Activated CD4-positive, alpha-beta T cell treated with anti-CD3 and anti-CD28 coated beads, Interleukin-2, amount 10 ng/mL, durations not matched to agents 24 days and 14 days (primary cell): ENCODE measurements at regions of chr3 and their contacts with region 1.

Region 1: DNA sequence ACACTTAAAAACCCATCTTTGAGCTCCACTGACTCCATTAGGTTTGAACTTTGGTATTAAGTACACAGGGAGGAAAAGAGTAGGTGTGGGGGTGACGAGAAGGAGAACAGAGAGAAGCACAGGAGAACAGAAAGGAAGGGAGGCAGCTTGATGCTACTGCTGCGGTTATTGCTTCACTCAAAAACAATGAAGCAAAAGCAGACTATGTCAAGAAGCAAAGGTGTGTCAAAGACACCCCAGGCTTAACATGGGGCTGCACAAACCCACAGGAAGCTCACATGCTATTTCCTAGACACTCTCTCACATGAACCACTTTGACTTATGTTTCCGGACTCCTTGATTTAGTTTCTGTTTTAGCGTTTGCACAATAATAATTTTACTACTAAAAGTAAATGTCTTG is 961.0 kb upstream of the CFAP20DC start:
- DNase-seq: peak; percentile 92
- H3K4me3 Mint-ChIP-seq: peak overlapping the region; percentile 80
- H3K27ac Mint-ChIP-seq: peak overlapping the region; percentile 93
- H3K4me1 Mint-ChIP-seq: peaks cover 66% of the 10 kb centered on the region
- H3K27me3 Mint-ChIP-seq: no peaks in the 10 kb centered on the region

Region 2: DNA sequence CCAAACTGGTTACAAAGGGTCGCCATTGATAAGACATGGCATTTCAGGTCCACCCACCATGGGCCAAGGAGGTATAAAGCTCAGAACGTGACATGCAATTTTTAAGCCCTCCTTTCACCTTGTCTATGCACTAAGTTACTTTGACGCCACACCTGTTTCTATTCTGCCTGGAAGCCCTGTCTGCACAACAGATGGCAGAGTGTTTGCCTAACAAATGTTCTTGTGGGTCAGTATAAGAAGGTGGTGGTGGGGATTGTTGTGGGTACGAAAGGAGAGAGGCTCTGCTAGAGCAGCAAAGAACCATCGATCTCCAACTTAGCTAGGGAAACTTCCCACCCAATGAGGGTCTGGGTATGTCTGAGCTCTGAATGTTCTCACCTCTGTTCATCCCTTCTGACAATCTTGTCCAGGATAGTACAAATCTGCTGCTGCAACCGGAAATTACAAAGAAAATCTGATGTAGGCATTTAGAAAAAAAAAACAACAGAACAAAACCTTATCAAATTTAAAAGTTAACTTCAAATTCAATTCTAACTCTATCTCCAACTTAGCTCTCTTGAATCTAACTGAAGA is 16.0 kb before region 1 on chr3:
- intact Hi-C with region 1: loop called (anchors 1 kb)
- DNase-seq: no peak
- H3K4me3 Mint-ChIP-seq: peak overlapping the region; percentile 10
- H3K27ac Mint-ChIP-seq: peak overlapping the region; percentile 64
- H3K4me1 Mint-ChIP-seq: peaks cover 36% of the 10 kb centered on the region
- H3K27me3 Mint-ChIP-seq: no peaks in the 10 kb centered on the region

Region 3: DNA sequence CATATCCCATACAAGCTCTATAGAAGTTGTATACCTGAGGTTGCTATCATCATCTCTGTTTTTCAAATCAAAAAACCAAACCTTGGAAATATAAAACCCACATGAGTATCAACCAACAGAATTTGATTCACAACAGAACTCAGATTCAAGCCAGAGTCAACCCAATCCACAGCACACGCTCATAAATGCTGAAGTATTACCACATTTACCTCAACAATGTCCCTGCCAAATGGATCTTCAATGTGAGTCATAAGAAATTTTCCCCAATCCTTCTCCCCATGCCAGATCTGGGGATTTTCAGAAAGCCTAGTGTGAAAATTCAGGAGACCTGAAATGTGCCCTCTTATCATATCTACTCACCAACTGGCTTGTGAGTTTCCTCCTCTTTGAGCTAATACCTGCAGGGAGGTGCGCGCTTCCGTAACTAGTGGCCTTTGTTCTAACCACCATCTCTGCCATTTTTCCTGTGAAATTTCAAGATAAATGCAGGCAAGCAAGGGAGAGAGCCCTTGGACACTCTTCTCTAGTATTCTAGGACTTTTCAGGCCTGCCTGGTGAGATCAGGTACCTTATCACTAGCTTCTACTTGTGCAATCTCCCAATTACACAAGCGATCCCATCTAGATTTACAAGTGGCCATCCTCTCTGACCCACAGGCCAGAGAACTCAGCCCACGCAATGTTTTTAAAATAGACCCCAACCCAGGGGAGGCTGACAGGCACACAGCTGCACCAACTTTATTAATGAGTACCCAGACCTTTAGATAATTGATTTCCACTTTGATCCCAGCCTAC is 115.9 kb after region 1 on chr3:
- intact Hi-C with region 1: no loop called
- DNase-seq: no peak
- H3K4me3 Mint-ChIP-seq: no peak overlapping the region
- H3K27ac Mint-ChIP-seq: no peak overlapping the region
- H3K4me1 Mint-ChIP-seq: no peaks in the 10 kb centered on the region
- H3K27me3 Mint-ChIP-seq: no peaks in the 10 kb centered on the region